ENCODE measurements at regions of chr3 and their contacts with region 1.

Region 1: DNA sequence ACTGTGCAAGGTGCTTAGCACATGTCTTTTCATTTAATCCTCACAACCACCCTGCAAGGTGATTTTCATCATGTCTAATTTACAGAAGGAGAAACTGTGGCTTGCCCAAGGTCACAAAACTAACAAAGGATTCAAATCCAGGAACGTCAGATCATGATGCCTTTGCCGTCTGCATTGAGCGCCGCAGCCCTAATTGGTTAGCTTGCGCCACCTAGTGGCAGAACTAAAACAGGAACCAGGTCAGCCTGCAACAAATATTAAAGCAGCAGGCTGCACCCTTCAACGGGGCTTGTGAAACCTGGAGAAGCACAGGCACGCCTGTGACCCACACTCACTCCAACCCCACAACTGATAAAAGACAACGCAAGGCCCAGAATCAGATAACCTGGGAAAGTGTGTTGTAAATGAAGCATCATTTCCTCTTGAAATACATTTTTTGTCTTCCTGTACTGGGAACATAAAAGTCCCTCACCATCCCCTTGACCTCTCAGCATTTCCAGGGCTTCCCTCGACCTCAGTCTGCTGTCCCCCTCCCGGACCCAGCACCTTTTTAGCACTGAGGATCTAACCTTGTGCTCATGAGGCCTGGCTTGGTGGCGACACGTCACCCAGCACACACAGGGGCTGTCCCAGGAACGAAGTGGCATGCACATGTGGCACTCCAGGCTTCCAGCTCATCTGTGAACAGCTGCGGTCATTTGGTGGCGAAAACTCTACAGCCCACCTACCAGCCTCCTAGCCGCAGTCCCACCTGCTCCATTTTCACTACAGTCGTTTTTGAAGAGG is 17.3 kb downstream of the DPH3 start:
- DNase-seq: peak; percentile 80 to 89 (median 81)
- H3K4me3 ChIP-seq: no peak overlapping the region
- H3K27ac ChIP-seq: no peak overlapping the region
- H3K4me1 ChIP-seq: peaks cover 8% of the 10 kb centered on the region
- H3K27me3 ChIP-seq: no peaks in the 10 kb centered on the region
- CTCF ChIP-seq: peak; percentile 89 to 93 (median 91)
- EP300 ChIP-seq: no peak
- POLR2A ChIP-seq: no peak

Region 2: GRCh38 chr3:15542614-15543013 is 704.9 kb before region 1 on chr3:
- intact Hi-C with region 1: no loop called
- DNase-seq: no peak
- H3K4me3 ChIP-seq: no peak overlapping the region
- H3K27ac ChIP-seq: no peak overlapping the region
- H3K4me1 ChIP-seq: no peaks in the 10 kb centered on the region
- H3K27me3 ChIP-seq: no peaks in the 10 kb centered on the region
- CTCF ChIP-seq: no peak
- EP300 ChIP-seq: no peak
- POLR2A ChIP-seq: no peak

Region 3: GRCh38 chr3:15815696-15816095 is 431.8 kb before region 1 on chr3:
- intact Hi-C with region 1: loop called in 3 of 4 experiments (anchors 5 to 10 kb)
- DNase-seq: no peak
- H3K4me3 ChIP-seq: no peak overlapping the region
- H3K27ac ChIP-seq: no peak overlapping the region
- H3K4me1 ChIP-seq: peaks cover 3% of the 10 kb centered on the region
- H3K27me3 ChIP-seq: no peaks in the 10 kb centered on the region
- CTCF ChIP-seq: peak in 2 of 3 donors; percentile 36 to 48
- EP300 ChIP-seq: no peak
- POLR2A ChIP-seq: no peak

Region 4: DNA sequence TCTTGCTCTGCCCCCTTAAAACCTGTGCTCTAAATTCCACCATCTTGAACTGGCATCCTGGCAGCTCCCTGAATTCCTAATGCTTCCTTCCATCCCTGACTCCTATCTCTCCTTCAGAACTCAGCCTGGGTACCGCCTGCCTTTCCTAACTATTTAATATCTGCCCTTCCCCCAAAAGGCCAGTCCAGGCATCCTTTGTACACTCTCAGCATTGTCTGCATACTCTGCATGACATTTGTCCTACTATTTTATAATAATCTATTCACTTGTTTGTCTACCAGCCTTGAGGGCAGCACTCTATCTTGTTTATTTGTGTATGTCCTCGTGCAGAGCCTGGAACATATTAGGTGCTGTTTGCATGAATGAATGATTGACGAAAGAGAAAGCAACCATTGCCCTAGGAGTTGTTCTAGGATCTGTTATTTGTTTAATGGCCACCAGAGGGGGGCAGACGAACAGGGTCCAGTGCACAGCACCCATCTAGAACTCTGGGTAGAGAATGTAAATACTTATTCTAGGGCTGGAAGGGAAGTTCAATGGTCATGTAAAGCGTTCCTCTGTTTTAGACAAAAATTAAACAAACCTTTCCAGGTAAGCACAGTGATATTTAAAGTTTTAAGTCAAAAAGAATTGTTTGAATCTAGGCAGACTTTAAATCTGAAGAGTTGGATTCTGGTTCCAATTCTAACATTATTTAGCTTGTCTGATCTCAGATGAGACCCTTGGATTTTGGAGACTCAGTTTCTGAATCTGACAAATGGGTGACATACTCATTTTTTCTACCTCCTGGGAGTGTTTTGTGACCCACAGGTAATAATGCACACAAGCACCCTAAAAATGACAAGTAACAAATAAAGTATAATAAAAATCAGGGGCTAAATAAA is 198.8 kb before region 1 on chr3:
- intact Hi-C with region 1: loop called (anchors 5 kb)
- DNase-seq: peak in 2 of 5 donors; percentile 32 to 70
- H3K4me3 ChIP-seq: no peak overlapping the region
- H3K27ac ChIP-seq: no peak overlapping the region
- H3K4me1 ChIP-seq: peaks cover 5% of the 10 kb centered on the region
- H3K27me3 ChIP-seq: no peaks in the 10 kb centered on the region
- CTCF ChIP-seq: peak; percentile 70 to 87 (median 80)
- EP300 ChIP-seq: no peak
- POLR2A ChIP-seq: no peak

Region 5: DNA sequence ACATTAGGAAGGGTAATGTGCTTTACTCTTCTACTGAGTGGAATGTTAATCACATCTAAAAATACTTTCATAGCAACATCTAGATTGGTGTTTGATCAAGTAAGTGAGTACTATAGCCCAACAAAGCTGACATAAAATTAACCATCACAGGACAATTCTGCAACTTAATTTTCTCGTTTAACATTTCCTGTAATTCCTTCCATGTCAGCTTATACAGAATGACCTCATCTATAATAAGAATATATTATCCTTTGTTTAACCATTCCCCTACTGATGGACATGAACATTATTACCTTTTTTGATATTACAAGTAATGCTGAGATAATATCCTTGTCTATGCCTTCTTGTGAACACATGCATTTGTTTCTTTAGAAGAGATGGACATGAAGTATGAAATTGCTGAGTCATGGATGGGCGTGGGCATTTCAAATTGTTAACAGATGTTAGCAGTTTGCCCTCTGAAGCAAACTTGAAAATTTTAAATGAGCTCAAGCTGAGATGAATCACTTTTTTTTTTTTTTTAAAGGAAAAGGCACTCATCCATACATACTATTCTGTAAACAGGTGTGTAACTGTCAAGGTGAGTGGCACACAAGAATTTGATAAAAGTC is 102.6 kb after region 1 on chr3:
- intact Hi-C with region 1: no loop called
- DNase-seq: no peak
- H3K4me3 ChIP-seq: no peak overlapping the region
- H3K27ac ChIP-seq: no peak overlapping the region
- H3K4me1 ChIP-seq: no peaks in the 10 kb centered on the region
- H3K27me3 ChIP-seq: no peaks in the 10 kb centered on the region
- CTCF ChIP-seq: no peak
- EP300 ChIP-seq: no peak
- POLR2A ChIP-seq: no peak

Region 6: DNA sequence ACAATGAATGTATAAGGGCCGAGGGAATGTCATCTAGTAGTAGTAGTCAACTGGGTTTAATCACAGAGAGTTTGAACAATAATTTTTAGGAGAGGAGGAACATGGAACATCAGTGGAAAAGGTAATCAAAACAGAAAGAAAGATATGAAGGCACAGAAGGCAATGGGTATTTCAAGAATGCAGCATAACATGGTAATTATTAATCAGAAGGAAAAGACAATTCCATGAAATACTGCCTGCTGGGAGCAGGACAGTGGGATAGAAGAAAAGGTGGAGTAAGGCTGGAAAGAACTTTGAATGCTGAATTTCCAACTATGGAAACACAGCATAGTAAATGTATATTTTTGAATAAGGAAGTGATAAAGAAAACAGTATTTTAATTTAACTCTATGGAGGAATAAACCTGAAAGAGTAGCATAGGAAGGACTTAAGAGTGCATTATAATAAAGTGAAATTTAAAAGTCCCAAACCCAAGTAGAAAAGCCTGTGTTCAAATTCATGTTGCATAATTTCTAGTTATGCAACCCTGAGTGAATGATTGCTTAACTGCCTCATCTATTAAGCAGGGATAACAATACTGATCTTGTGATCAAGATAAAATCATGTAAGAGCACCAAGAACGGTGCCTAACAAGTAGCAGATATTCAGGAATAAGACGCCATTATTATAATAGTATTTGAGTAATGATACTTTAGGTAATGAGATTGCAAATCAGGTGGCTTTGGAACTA is 1137.3 kb after region 1 on chr3:
- intact Hi-C with region 1: no loop called
- DNase-seq: no peak
- H3K4me3 ChIP-seq: no peak overlapping the region
- H3K27ac ChIP-seq: no peak overlapping the region
- H3K4me1 ChIP-seq: no peaks in the 10 kb centered on the region
- H3K27me3 ChIP-seq: no peaks in the 10 kb centered on the region
- CTCF ChIP-seq: no peak
- EP300 ChIP-seq: no peak
- POLR2A ChIP-seq: no peak

Measured in ovary (tissue), 10 donors.